ENCODE measurements at regions of chr1 and their contacts with region 1.

Region 1: DNA sequence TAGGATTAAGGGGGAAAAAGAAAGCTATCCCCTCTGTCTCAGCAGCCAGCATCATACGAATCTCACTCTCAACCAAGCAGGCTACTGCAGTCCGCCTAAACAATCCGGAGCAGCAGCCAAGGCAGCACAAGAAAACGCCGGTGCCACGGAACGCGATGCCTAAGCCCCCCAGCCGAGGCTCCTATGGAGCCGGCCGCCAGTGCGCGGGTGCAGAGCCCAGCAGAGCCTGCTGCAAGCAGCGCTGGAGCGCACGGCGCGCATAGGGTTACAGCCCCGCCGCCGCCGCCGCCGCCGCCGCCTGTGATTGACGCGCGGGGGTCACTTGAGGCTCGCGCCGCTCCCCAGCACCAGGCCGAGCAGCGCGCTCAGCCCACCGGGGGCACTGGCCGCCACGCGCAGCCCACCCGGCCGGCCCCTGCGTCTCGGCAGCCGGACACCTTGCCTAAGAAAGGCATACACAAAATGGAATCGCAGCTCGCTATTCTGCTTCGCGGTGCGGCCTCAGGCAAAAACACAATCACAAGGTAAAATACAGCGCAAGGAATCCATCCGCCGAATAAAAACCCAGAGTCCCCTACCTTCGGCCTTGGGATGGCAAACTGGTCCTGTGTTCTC is 780 bp downstream of the HIVEP3 start:
- DNase-seq: peak; percentile 57
- H3K4me3 ChIP-seq: peak overlapping the region; percentile 21 to 58 (median 45)
- H3K27ac ChIP-seq: no peak overlapping the region
- H3K4me1 ChIP-seq: peaks cover 14% of the 10 kb centered on the region
- H3K27me3 ChIP-seq: no peaks in the 10 kb centered on the region
- CTCF ChIP-seq: no peak
- POLR2A ChIP-seq: no peak

Region 2: DNA sequence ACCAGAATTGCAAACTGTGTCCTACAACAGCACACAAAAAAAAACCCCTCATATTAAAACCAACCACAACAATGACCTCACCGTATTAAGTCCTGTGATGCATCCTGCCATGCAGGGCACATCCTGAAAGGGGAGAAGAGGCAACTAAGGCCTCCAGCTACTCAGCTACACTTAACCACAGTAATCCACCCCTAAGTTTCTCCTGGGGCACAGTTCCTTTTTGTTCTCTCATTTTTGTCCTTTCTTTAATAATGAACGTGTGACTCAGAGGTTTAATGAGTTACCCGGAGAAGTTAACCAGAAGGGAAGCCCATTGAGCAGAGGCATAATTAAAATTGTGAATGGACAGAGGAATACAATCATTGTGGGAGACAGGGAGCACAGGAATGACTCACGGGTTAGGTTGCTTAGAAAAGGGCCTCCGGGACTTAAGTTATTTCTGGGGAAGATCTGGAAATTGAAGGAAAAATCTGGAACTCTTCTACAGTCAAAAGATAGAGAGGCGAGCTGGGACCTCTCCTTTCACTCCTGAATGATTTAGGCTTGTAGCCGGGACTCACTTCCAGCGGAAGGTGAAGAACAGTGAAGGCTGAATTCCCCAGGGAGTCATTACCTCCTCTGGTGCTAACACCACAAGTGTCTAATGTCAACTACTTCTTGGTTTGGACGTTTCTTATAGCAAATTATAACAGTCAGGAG is 37.7 kb after region 1 on chr1:
- CTCF ChIA-PET with region 1: no interaction called
- POLR2A ChIA-PET with region 1: no interaction called
- dilution Hi-C with region 1: no loop called
- intact Hi-C with region 1: loop called (anchors 1 kb)
- DNase-seq: peak; percentile 84
- H3K4me3 ChIP-seq: peak overlapping the region in 1 of 3 experiments; percentile 13
- H3K27ac ChIP-seq: peak overlapping the region; percentile 94
- H3K4me1 ChIP-seq: peaks cover 35% of the 10 kb centered on the region
- H3K27me3 ChIP-seq: no peaks in the 10 kb centered on the region
- CTCF ChIP-seq: no peak
- POLR2A ChIP-seq: no peak